Adrenal gland (tissue), 19 donors: ENCODE measurements at regions of chr15 and their contacts with region 1.

Region 1: GRCh38 chr15:98421419-98422129 is 226.8 kb upstream of the IGF1R start:
- DNase-seq: peak; percentile 22 to 79 (median 62)
- H3K4me3 ChIP-seq: peak overlapping the region in 1 of 4 donors; percentile 4
- H3K27ac ChIP-seq: no peak overlapping the region
- H3K4me1 ChIP-seq: peaks cover 7 to 9% of the 10 kb centered on the region in 2 donors
- H3K27me3 ChIP-seq: peaks cover 22% of the 10 kb centered on the region
- CTCF ChIP-seq: peak; percentile 90 to 100 (median 97)
- POLR2A ChIP-seq: no peak

Region 2: GRCh38 chr15:98311566-98312188 is 109.9 kb before region 1 on chr15:
- intact Hi-C with region 1: loop called (anchors 2 to 5 kb)
- DNase-seq: peak; percentile 64 to 95 (median 85)
- H3K4me3 ChIP-seq: no peak overlapping the region
- H3K27ac ChIP-seq: no peak overlapping the region
- H3K4me1 ChIP-seq: no peaks in the 10 kb centered on the region
- H3K27me3 ChIP-seq: peaks cover 13% of the 10 kb centered on the region
- CTCF ChIP-seq: peak; percentile 71 to 86 (median 80)
- POLR2A ChIP-seq: no peak

Region 3: DNA sequence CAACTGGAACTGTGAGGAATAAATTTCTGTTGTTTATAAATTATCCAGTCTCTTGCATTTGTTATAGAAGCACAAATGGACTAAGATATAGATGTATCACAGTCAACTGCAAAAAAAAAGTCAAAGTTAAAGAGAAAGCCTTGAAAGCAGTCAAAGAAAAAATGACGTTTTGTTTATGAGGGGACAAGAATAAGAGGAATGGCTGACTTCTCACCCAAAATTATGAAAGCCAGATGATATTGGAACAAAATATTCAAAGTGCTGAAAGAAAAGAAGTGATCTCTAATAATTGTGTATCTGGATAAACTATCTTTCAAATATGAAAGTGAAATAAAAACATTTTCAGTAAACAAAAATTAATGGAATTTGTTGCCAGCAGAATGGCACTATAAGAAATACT is 55.0 kb after region 1 on chr15:
- intact Hi-C with region 1: no loop called
- DNase-seq: no peak
- H3K4me3 ChIP-seq: no peak overlapping the region
- H3K27ac ChIP-seq: no peak overlapping the region
- H3K4me1 ChIP-seq: no peaks in the 10 kb centered on the region
- H3K27me3 ChIP-seq: no peaks in the 10 kb centered on the region
- CTCF ChIP-seq: no peak
- POLR2A ChIP-seq: no peak

Region 4: DNA sequence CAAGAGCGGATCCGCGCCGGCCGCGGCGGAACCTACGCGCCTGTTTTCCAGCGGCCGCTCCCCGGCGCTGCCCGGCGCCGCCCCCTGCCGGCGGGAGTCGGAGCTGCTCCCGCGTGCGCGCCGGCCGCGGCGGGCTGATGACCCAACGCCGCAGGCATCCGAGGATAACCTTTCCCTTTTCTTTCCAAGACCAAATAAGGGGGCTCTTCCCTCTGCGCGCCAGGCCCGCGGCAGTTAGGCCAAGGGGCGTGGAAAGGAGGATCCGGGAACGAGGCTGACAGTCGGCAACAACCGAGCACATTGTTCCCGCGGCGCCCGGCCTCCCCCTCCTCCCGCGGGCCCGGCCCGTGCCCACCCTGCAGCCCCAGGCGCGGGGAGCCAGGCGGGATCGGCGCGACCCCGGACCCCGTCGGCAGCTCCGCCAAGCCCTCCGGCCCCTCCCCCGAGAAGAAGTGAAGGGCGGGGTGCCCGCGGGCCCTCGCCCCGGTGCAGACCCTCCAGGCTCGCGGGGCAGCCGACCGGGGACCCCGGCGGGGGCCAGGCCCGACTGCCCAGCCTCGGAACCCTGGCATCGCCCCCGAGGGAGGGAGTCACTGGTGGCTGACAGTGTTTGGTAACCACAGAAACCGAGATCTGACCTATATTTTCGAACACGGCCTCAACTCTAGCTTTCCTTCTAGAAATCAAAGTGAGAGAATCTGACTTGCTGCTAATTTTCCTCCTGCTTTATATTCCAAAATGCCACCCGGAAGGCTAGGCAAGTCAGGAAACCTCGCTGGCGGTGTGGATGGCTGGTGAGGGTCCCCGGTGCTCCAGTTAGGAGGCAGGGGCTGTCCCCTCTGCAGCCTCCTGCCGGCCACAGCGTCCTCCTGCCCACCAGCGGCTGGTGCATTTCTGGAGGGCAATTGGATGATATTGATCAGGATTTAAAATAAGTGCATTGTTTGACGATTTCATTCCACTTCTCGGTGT is 637.7 kb after region 1 on chr15:
- intact Hi-C with region 1: no loop called
- DNase-seq: peak; percentile 61 to 80 (median 68)
- H3K4me3 ChIP-seq: peak overlapping the region in 2 of 4 donors; percentile 39 to 80
- H3K27ac ChIP-seq: peak overlapping the region in 3 of 5 donors; percentile 39 to 68 (median 48)
- H3K4me1 ChIP-seq: peaks cover 5 to 7% of the 10 kb centered on the region in 2 donors
- H3K27me3 ChIP-seq: no peaks in the 10 kb centered on the region
- CTCF ChIP-seq: peak in 4 of 6 experiments; percentile 21 to 91 (median 78)
- POLR2A ChIP-seq: no peak